Caco-2 (cell line): ENCODE measurements at regions of chr9 and their contacts with region 1.

Region 1: DNA sequence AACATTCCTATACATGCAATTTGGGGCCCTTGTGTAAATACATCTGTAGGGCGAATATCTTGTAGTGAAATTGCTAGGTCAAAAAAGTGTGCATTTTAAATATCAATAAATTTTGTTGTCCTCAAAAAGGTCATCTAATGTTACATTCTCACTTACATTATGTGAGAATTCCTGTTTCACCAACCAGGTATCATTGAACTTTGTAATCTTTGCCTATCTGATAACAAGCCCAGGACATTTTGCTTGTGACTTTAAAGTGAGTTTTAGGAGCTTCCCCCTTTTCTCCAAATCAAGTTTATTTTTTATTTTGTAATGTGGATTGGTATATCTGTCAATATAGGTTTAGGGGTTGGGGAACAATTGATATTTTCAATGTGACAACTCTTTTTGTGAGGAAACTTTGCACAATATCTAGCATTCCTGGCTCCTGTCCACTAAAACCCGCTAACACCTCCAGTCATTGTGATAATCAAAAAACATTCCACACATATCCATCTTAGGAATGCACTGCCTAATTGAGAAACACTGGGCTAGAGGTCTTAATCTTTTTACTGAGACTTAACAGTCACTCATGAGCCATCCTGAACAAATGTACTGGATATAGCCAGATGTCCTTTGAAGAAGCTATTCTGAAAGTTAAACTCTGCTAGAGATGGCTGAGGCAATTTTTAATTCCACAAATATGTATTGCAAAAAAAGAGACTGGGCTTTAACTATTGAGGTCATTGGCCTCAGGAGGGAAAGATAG is 72.5 kb upstream of the SLC1A1 start:
- DNase-seq: peak in 1 of 2 experiments; percentile 49
- H3K4me3 ChIP-seq: no peak overlapping the region
- H3K4me3 Mint-ChIP-seq: peak overlapping the region; percentile 59
- H3K27ac Mint-ChIP-seq: peak overlapping the region; percentile 74
- H3K4me1 ChIP-seq: peaks cover 60% of the 10 kb centered on the region
- H3K4me1 Mint-ChIP-seq: peaks cover 42% of the 10 kb centered on the region
- H3K27me3 ChIP-seq: no peaks in the 10 kb centered on the region
- H3K27me3 Mint-ChIP-seq: no peaks in the 10 kb centered on the region
- CTCF ChIP-seq: no peak

Region 2: DNA sequence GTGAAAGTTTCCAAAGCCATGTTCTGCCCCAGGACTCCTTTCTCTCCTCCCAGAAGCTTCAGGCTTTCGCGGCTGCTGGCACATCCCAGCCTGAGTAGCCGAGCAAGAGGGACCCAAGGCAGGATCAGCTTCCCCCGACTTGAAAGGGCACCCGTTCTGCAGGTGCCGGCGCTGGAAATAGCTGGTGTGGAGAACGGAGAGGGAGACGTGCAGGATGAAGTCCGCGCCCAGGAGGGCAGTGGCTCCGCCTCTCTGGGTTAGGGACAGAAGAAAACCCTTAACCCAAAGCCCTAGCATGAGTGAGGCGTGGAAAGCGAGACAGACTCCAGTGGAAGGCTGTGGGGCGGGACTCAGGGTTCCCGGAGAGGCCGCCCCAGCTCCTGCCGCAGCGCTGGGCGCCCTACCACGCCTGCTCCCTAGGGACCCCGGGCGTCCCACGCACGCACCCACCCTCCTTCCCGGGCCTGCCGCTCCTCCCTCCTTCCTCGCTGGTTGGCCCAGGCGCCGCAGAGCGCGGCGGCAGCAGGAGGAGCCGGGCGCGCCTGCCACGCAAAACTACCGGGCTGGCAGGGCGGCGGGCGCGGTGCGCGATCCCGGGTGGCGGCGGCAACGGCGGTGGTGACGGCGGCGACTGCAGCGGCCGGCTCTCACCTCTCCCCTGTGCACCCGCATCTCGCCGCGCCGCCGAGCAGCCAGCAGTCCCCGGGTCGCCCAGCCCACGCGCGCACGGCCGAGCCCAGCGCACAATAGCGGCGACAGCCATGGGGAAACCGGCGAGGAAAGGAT is 72.4 kb after region 1 on chr9 and contains the start of gene SLC1A1:
- CTCF ChIA-PET with region 1: no interaction called
- POLR2A ChIA-PET with region 1: no interaction called
- intact Hi-C with region 1: loop called (anchors 1 kb)
- DNase-seq: peak; percentile 73 to 83
- H3K4me3 ChIP-seq: peak within 1 kb of the TSS; percentile 69
- H3K4me3 Mint-ChIP-seq: peak within 1 kb of the TSS; percentile 82
- H3K27ac Mint-ChIP-seq: peak within 1 kb of the TSS; percentile 97
- H3K4me1 ChIP-seq: peaks cover 40% of the 10 kb centered on the region
- H3K4me1 Mint-ChIP-seq: peaks cover 17% of the 10 kb centered on the region
- H3K27me3 ChIP-seq: no peaks in the 10 kb centered on the region
- H3K27me3 Mint-ChIP-seq: no peaks in the 10 kb centered on the region
- CTCF ChIP-seq: no peak
- total RNA-seq, gene SLC1A1: 43.3 and 53.1 TPM in 2 replicates